Cardiac septum (tissue), 1 donor: ENCODE measurements at regions of chr14 and their contacts with region 1.

Region 1: GRCh38 chr14:49892636-49893308 is at the start of gene ARF6:
- DNase-seq: peak; percentile 100
- total RNA-seq, gene ARF6: 33.2 TPM

Region 2: GRCh38 chr14:49867831-49868723 is 24.7 kb before region 1 on chr14:
- intact Hi-C with region 1: loop called (anchors 1 kb)
- DNase-seq: peak; percentile 99

Region 3: DNA sequence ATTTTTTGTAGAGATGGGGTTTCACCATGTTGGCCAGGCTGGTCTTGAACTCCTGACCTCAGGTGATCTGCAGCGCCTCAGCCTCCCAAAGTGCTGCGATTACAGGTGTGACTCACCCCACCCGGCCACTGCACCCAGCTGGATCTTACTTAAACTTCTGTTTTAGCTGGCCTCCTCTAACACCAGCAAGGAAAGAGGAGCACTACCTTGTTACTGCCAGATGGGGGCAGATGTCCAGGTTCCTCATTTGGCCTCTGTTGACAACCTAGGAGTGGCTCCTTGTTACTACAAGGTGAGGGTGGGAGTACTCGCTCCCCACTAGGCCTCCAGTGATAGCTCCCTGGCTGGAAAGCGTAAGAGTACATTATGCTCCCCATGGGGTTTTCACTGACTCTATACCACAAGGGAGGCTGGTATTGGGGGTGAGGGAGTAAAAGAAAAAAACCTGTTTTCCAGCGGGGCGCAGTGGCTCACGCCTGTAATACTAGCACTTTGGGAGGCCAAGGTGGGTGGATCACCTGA is 13.0 kb before region 1 on chr14:
- intact Hi-C with region 1: no loop called
- DNase-seq: no peak

Region 4: GRCh38 chr14:49934646-49935045 is 41.9 kb after region 1 on chr14:
- intact Hi-C with region 1: no loop called
- DNase-seq: no peak

Region 5: GRCh38 chr14:49971156-49972130 is 78.7 kb after region 1 on chr14:
- intact Hi-C with region 1: loop called (anchors 2 kb)
- DNase-seq: no peak

Region 6: DNA sequence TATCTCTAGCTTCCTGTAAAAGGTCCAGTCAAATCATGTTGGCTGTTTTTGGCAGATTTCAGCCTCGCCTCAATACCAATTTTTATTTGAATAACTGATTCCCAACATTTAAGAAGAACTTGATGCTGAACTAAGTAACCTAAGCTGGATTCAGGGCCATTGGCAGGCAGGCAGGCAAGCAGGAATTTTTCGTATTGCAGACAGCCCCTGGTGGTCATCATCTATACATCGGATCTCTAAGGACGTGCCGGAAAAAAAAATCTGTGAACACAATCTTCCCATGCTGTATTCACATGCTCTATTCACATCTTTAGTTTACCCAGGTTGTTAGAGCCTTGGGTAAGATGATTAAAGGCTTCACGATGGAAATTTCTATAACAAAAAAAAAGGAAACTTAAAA is 216.6 kb after region 1 on chr14:
- intact Hi-C with region 1: loop called (anchors 5 kb)
- DNase-seq: no peak